Activated T-helper 2 cell treated with anti-CD3 and anti-CD28 coated beads, Interferon-gamma antibody, Interleukin-2, Interleukin-4, amounts not matched to agents 10 μg/mL and 5 μg/mL and 100 μg/mL, durations not matched to agents 14 hours and 24 hours and 36 hours (primary cell): ENCODE measurements at regions of chr10 and their contacts with region 1.

Region 1: DNA sequence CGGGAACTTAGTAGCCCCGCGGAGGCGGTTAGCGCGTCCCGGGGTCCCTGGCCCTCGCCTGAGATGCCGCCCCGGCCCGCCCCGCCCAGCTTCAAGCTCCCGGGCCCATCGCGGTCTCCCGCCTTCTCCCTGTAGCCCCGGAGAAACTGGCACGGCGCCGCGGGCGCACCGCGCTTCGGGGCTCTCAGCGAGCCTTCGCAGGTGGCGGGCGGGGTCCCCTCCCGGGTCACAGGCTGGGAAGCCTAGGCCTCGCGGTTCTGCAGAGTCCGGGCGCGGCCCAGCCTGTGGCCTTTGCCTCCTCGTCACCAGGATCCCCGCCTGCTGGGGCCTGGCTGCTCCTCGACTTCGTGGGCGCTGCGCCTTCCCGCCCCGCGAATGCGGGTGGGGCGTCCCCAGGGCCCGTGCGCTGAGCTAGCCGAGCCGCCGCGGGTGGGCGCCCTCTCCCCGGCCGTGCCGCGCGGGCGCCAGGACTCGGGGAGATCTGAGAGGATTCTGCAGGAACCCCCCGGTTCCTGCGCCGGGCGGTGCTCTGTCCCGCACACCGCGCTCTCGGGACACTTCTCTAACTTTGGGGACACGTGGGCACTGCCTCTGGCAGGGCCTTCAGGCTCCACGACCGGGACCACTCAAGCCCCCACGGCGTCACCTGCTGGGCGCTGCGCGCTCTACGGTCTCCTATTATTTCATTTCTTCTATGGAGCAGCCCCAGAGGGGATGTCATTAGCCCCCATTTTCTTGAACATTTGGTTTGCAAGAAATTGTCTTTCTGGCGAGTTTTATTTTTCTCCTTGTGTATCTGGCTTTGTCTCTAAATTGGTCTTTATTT is 682 bp upstream of the RGS10 start:
- DNase-seq: peak; percentile 52
- H3K4me3 Mint-ChIP-seq: peak overlapping the region; percentile 88
- H3K27ac Mint-ChIP-seq: peak overlapping the region; percentile 86
- H3K4me1 Mint-ChIP-seq: peaks cover 39% of the 10 kb centered on the region
- H3K27me3 Mint-ChIP-seq: peaks cover 18% of the 10 kb centered on the region

Region 2: DNA sequence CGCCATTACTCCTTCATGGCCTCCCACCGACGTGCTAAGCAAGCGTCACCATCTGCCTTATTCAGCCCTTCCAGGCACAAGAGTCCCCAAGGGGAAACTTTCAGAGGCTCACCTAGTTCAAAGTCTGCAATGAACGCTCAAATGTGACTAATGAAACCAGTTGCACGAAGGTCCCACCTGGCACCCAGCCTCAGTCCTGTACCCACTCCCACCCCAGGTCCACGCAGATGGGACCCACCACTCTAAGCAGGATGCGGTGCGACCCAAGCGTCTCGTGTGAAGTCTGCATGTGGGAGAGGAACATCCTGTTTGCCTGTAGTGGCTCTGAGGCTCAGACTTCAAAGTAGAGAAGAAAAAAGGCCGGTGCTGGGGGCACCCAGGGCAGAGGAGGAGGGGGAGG is 41.0 kb before region 1 on chr10:
- intact Hi-C with region 1: loop called (anchors 1 kb)
- DNase-seq: peak; percentile 71
- H3K4me3 Mint-ChIP-seq: peak overlapping the region; percentile 53
- H3K27ac Mint-ChIP-seq: peak overlapping the region; percentile 83
- H3K4me1 Mint-ChIP-seq: peaks cover 74% of the 10 kb centered on the region
- H3K27me3 Mint-ChIP-seq: no peaks in the 10 kb centered on the region

Region 3: GRCh38 chr10:119517235-119518141 is 25.7 kb before region 1 on chr10:
- intact Hi-C with region 1: loop called (anchors 1 kb)
- DNase-seq: peak; percentile 51
- H3K4me3 Mint-ChIP-seq: peak overlapping the region; percentile 47
- H3K27ac Mint-ChIP-seq: peak overlapping the region; percentile 77
- H3K4me1 Mint-ChIP-seq: peaks cover 36% of the 10 kb centered on the region
- H3K27me3 Mint-ChIP-seq: no peaks in the 10 kb centered on the region

Region 4: GRCh38 chr10:119650692-119651513 is 107.7 kb after region 1 on chr10 and contains the start of gene BAG3:
- intact Hi-C with region 1: loop called (anchors 2 kb)
- DNase-seq: peak; percentile 73
- H3K4me3 Mint-ChIP-seq: peak within 1 kb of the TSS; percentile 96
- H3K27ac Mint-ChIP-seq: peak within 1 kb of the TSS; percentile 95
- H3K4me1 Mint-ChIP-seq: peaks cover 45% of the 10 kb centered on the region
- H3K27me3 Mint-ChIP-seq: peaks cover 9% of the 10 kb centered on the region
- total RNA-seq, gene BAG3: 31.8 and 33.3 TPM in 2 replicates